ENCODE measurements at regions of chr19 and their contacts with region 1.

Region 1: GRCh38 chr19:47779524-47780214 is 1.2 kb downstream of the SELENOW start:
- DNase-seq: no peak
- H3K4me3 ChIP-seq: peak overlapping the region; percentile 74 to 99 (median 85)
- H3K27ac ChIP-seq: peak overlapping the region; percentile 92 to 99 (median 97)
- H3K4me1 ChIP-seq: peaks cover 12 to 57% (median 41%) of the 10 kb centered on the region in 6 donors
- H3K27me3 ChIP-seq: no peaks in the 10 kb centered on the region
- CTCF ChIP-seq: no peak
- POLR2A ChIP-seq: no peak

Region 2: GRCh38 chr19:47713046-47714021 is 66.3 kb before region 1 on chr19 and contains the start of gene EHD2:
- intact Hi-C with region 1: loop called (anchors 10 kb)
- DNase-seq: peak; percentile 85
- H3K4me3 ChIP-seq: peak within 1 kb of the TSS; percentile 42 to 71 (median 51)
- H3K27ac ChIP-seq: peak within 1 kb of the TSS in 7 of 8 donors; percentile 58 to 87 (median 81)
- H3K4me1 ChIP-seq: peaks cover 0 to 45% (median 23%) of the 10 kb centered on the region in 6 donors
- H3K27me3 ChIP-seq: peaks cover 0 to 53% (median 3%) of the 10 kb centered on the region in 7 donors
- CTCF ChIP-seq: peak; percentile 48 to 93 (median 81)
- POLR2A ChIP-seq: no peak
- total RNA-seq, gene EHD2: 48.9 to 87.7 (median 64.3) TPM